ENCODE measurements at regions of chr12 and their contacts with region 1.

Region 1: GRCh38 chr12:45543906-45544315 is 185.6 kb upstream of the ARID2 start:
- DNase-seq: peak; percentile 53
- ATAC-seq: peak; percentile 88
- H3K4me3 ChIP-seq: no peak overlapping the region
- H3K27ac ChIP-seq: no peak overlapping the region
- H3K4me1 ChIP-seq: no peaks in the 10 kb centered on the region
- H3K27me3 ChIP-seq: peaks cover 0 to 7% of the 10 kb centered on the region in 2 experiments; a peak in 1 of 5 replicates
- CTCF ChIP-seq: peak; percentile 77
- EP300 ChIP-seq: no peak
- POLR2A ChIP-seq: no peak
- RAD21 ChIP-seq: no peak

Region 2: GRCh38 chr12:45557016-45557415 is 13.1 kb after region 1 on chr12:
- CTCF ChIA-PET with region 1: no interaction called
- POLR2A ChIA-PET with region 1: no interaction called
- in situ Hi-C with region 1: no loop called
- intact Hi-C with region 1: no loop called
- DNase-seq: no peak
- ATAC-seq: no peak
- H3K4me3 ChIP-seq: no peak overlapping the region
- H3K27ac ChIP-seq: no peak overlapping the region
- H3K4me1 ChIP-seq: no peaks in the 10 kb centered on the region
- H3K27me3 ChIP-seq: peaks cover 0 to 4% of the 10 kb centered on the region in 2 experiments; a peak in 1 of 5 replicates
- CTCF ChIP-seq: no peak
- EP300 ChIP-seq: no peak
- POLR2A ChIP-seq: no peak
- RAD21 ChIP-seq: no peak

Region 3: GRCh38 chr12:45728630-45729232 is 184.8 kb after region 1 on chr12:
- CTCF ChIA-PET with region 1: interaction called, 3 read pairs
- POLR2A ChIA-PET with region 1: interaction called, 3 read pairs
- in situ Hi-C with region 1: loop called (anchors 5 kb)
- intact Hi-C with region 1: loop called (anchors 2 kb)
- DNase-seq: peak; percentile 92
- ATAC-seq: peak; percentile 78
- H3K4me3 ChIP-seq: peak overlapping the region; percentile 97 to 99 (median 98)
- H3K27ac ChIP-seq: peak overlapping the region; percentile 95
- H3K4me1 ChIP-seq: peaks cover 35% of the 10 kb centered on the region
- H3K27me3 ChIP-seq: no peaks in the 10 kb centered on the region; a peak in 1 of 5 replicates
- CTCF ChIP-seq: peak; percentile 95
- EP300 ChIP-seq: peak; percentile 26 to 39; a peak in 2 of 4 replicates
- POLR2A ChIP-seq: peak; percentile 83 to 87
- RAD21 ChIP-seq: peak; percentile 82

Region 4: DNA sequence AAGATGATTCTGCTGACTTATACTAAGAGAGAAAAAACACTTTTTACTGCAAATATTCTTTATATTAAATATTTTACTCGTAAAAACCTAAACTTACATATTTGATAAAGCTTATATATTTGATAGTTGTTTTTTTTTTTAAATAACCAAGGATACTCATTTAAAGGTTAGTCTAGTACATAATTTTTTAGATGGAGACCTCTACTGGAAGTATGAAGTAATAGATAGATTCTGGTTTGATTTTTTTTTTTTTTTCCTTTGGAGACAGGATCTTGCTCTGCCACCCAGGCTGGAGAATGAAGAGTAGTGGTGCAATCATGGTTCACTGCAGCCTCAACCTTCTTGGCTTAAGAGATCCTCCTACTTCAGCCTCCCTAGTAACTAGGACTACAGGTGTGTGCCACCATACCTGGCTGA is 202.0 kb after region 1 on chr12:
- CTCF ChIA-PET with region 1: no interaction called
- POLR2A ChIA-PET with region 1: no interaction called
- in situ Hi-C with region 1: no loop called
- intact Hi-C with region 1: loop called (anchors 5 kb)
- DNase-seq: no peak
- ATAC-seq: peak; percentile 48; the same call in 2 of the 3 replicates
- H3K4me3 ChIP-seq: no peak overlapping the region
- H3K27ac ChIP-seq: no peak overlapping the region
- H3K4me1 ChIP-seq: peaks cover 13% of the 10 kb centered on the region; the same call in 1 of the 2 replicates
- H3K27me3 ChIP-seq: no peaks in the 10 kb centered on the region
- CTCF ChIP-seq: no peak
- EP300 ChIP-seq: no peak
- POLR2A ChIP-seq: no peak
- RAD21 ChIP-seq: no peak

Region 5: GRCh38 chr12:45893240-45893639 is 349.3 kb after region 1 on chr12:
- CTCF ChIA-PET with region 1: no interaction called
- POLR2A ChIA-PET with region 1: no interaction called
- in situ Hi-C with region 1: loop called (anchors 25 kb)
- intact Hi-C with region 1: no loop called
- DNase-seq: peak; percentile 13
- ATAC-seq: peak; percentile 54; the same call in 1 of the 3 replicates
- H3K4me3 ChIP-seq: no peak overlapping the region
- H3K27ac ChIP-seq: no peak overlapping the region
- H3K4me1 ChIP-seq: no peaks in the 10 kb centered on the region
- H3K27me3 ChIP-seq: no peaks in the 10 kb centered on the region
- CTCF ChIP-seq: 0 out of 2 replicates have a peak, but pooled peaks have one; percentile 25
- EP300 ChIP-seq: no peak
- POLR2A ChIP-seq: no peak
- RAD21 ChIP-seq: no peak